ENCODE measurements at regions of chr7 and their contacts with region 1.

Region 1: DNA sequence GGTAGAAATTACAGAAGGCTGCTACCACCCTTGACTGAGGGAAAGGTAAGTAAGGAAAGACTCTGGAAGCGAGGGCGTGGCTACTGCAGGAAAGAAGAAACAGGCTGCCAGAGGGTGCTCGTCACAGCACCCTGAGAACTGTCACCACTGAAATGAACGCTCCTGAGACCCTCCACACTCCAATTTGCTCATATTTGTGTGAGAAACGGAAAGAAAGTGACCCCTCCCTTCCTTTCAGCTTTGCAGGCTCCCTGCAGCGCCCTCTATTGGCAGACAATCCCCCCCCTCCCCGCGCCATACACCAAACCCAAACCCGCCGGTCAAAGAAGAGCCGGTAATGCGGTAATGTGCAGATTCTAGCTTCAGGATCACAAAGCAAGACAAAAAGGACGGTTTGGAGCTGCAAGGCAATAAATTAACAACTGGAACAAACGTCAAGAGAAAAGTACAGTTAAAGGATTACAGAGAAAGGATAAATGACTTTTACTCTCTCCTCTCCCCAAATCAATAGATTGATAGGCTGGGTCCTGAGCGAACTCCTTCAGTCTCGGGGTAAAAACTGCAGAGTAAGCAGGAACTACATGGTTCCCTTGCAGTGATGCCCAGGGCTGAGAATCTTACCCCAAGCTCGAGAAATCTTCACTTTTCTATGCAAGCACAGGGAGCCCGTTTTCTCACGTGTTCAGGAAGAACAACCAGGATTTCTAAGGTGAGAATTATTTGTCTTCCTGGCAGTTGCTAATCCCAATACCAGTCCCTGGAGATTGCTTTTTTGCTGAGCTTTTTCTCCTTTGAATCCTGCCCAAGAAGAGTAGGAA is 47.6 kb downstream of the STEAP1B start:
- DNase-seq: peak; percentile 80
- H3K4me3 Mint-ChIP-seq: peak overlapping the region; percentile 13
- H3K27ac Mint-ChIP-seq: no peak overlapping the region
- H3K4me1 Mint-ChIP-seq: peaks cover 16% of the 10 kb centered on the region
- H3K27me3 Mint-ChIP-seq: peaks cover 64% of the 10 kb centered on the region

Region 2: GRCh38 chr7:22361795-22362194 is 90.6 kb before region 1 on chr7:
- intact Hi-C with region 1: loop called (anchors 10 kb)
- DNase-seq: no peak
- H3K4me3 Mint-ChIP-seq: no peak overlapping the region
- H3K27ac Mint-ChIP-seq: no peak overlapping the region
- H3K4me1 Mint-ChIP-seq: peaks cover 3% of the 10 kb centered on the region
- H3K27me3 Mint-ChIP-seq: peaks cover 26% of the 10 kb centered on the region

Region 3: DNA sequence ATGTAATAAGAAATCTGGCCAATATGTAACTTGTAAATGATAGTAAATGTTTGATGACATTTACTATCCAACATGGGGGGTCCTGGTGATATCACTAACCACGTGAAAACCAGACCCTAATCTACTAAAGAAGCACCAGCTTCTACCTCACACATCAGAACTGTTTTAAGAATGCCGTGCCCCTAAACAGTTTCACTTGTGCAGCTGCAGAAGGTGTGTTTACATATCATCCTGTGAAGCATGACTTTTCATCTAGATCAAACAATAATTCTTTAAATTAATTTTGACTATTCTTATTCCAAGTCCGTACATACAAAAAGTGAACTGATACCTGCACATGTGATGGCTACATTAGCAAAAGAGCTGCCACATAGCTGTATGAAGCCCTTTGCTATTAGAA is 13.4 kb before region 1 on chr7:
- intact Hi-C with region 1: no loop called
- DNase-seq: no peak
- H3K4me3 Mint-ChIP-seq: no peak overlapping the region
- H3K27ac Mint-ChIP-seq: no peak overlapping the region
- H3K4me1 Mint-ChIP-seq: peaks cover 3% of the 10 kb centered on the region
- H3K27me3 Mint-ChIP-seq: peaks cover 19% of the 10 kb centered on the region